AG04450 (cell line): ENCODE measurements at regions of chr9 and their contacts with region 1.

Region 1: GRCh38 chr9:129139993-129140396 is 28.8 kb downstream of the PTPA start:
- DNase-seq: peak; percentile 99
- H3K4me3 ChIP-seq: peak overlapping the region; percentile 60
- H3K27ac ChIP-seq: peak overlapping the region; percentile 100
- H3K27me3 ChIP-seq: no peaks in the 10 kb centered on the region
- CTCF ChIP-seq: no peak

Region 2: GRCh38 chr9:129166623-129167557 is 26.9 kb after region 1 on chr9:
- CTCF ChIA-PET with region 1: interaction called, 145 read pairs
- POLR2A ChIA-PET with region 1: interaction called, 21 read pairs
- DNase-seq: no peak
- H3K4me3 ChIP-seq: peak overlapping the region; percentile 42
- H3K27ac ChIP-seq: peak overlapping the region; percentile 98
- H3K27me3 ChIP-seq: no peaks in the 10 kb centered on the region
- CTCF ChIP-seq: no peak

Region 3: DNA sequence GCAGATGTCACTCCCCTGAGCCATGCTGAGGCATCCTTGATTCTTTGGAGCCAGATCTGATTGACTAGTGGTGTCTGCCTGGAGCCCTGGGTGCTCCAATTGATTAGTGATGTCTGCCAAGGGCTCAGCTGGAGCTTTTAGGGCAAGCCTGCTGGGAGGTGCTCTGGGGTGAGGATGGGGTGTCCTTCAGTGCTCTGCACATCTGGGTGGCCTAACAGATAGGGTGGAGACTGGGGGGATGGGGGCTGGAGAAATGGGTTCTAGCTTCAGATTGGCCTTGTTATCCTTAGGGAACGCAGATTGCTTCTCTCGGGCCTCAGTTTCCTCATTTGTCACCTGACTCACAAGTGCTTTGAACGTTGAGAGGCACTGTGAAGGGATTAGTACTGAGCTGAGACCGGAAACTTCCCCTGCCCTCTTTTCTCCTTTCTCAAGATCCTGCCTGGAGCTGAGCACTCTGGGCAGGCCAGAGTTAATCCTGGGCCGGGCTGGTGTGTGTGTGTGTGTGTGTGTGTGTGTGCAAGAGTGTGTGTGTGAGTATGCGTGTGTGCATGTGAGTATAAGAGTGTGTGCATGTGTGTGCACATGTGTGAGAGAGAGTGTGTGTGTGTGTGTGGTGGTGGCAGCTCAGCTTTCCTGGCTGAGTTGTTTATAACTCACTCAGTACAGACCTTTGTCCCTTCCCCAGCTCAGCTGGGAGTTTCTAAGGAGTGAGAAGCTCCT is 43.7 kb after region 1 on chr9:
- CTCF ChIA-PET with region 1: interaction called, 10 read pairs
- POLR2A ChIA-PET with region 1: no interaction called
- DNase-seq: no peak
- H3K4me3 ChIP-seq: no peak overlapping the region
- H3K27ac ChIP-seq: no peak overlapping the region
- H3K27me3 ChIP-seq: no peaks in the 10 kb centered on the region
- CTCF ChIP-seq: no peak

Region 4: DNA sequence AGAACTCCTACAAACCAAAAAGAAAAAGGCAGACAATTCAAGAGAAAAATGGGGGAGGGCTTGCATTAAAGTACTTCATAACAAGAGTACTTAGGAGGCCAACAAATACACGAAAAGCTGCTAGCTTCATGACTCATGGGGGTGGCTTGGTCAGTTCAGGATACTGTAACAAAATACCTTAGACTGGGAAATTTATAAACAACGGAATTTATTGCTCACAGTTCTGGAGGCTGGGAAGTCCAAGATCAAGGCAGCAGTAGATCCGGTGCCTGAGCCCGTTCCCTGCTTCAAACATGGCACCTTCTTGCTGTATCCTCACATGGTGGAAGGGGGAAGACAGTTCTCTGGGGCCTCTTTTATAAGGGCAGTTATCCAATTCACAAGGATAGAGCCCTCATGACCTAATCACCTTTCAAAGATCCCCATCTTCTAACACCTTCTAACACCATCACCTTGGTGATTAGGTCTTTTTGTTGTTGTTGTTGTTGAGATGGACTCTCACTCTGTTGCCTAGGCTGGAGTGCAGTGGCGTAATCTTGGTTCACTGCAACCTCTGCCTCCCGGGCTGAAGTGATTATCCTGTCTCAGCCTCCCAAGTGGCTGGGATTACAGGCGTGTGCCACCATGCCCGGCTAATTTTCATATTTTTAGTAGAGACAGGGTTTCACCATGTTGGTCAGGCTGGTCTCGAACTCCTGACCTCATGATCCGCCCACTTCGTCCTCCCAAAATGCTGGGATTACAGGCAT is 369.7 kb after region 1 on chr9:
- CTCF ChIA-PET with region 1: interaction called, 4 read pairs
- POLR2A ChIA-PET with region 1: interaction called, 12 read pairs
- DNase-seq: peak; percentile 91
- H3K4me3 ChIP-seq: no peak overlapping the region
- H3K27ac ChIP-seq: peak overlapping the region; percentile 70
- H3K27me3 ChIP-seq: no peaks in the 10 kb centered on the region
- CTCF ChIP-seq: no peak

Region 5: DNA sequence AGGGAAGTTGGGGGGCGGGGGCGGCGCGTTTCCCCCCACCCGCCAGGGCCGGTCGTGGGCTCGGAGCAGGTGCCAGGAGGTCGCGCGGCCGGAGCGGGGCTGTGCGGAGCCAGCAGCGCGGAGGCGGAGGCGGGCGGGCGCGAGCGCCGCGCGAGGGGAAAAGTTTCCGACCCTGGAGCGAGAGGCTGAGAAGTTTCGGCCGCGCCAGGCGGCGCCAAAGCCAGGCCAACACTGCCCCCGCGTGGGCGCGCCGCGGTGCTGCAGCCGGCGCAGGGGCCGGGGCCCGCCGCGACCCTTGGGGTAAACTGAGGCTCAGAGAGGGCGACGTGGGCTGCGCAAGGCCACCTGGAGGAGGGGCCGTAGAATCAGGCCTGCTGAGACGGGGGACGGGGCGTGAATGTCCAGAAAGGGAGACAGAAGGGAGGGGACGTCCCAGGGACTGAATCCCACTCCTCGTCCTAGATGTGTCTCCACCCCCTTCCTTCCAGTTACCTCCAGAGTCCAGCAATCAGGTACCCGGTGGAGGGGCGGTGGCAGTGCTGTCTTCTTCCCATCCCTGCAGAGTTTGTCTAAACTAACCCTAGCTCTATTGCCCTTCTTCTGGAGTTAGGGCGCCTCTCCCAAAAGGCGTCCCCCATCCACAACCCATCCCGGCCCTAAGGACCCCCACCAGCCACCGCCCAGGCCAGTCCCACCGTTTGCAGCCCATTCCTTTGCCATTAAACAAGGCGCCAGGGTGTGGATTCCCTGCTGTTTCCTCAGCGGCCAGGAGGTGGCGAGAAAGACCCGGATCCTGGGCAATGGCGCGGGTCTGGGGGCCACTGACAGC is 470.7 kb after region 1 on chr9:
- CTCF ChIA-PET with region 1: interaction called, 21 read pairs
- POLR2A ChIA-PET with region 1: interaction called, 5 read pairs
- DNase-seq: no peak
- H3K4me3 ChIP-seq: peak overlapping the region; percentile 68
- H3K27ac ChIP-seq: peak overlapping the region; percentile 47
- H3K27me3 ChIP-seq: no peaks in the 10 kb centered on the region
- CTCF ChIP-seq: peak; percentile 80

Region 6: GRCh38 chr9:129617167-129617566 is 477.2 kb after region 1 on chr9:
- CTCF ChIA-PET with region 1: interaction called, 302 read pairs
- POLR2A ChIA-PET with region 1: interaction called, 4 read pairs
- DNase-seq: peak; percentile 67
- H3K4me3 ChIP-seq: no peak overlapping the region
- H3K27ac ChIP-seq: no peak overlapping the region
- H3K27me3 ChIP-seq: no peaks in the 10 kb centered on the region
- CTCF ChIP-seq: peak; percentile 73

Region 7: DNA sequence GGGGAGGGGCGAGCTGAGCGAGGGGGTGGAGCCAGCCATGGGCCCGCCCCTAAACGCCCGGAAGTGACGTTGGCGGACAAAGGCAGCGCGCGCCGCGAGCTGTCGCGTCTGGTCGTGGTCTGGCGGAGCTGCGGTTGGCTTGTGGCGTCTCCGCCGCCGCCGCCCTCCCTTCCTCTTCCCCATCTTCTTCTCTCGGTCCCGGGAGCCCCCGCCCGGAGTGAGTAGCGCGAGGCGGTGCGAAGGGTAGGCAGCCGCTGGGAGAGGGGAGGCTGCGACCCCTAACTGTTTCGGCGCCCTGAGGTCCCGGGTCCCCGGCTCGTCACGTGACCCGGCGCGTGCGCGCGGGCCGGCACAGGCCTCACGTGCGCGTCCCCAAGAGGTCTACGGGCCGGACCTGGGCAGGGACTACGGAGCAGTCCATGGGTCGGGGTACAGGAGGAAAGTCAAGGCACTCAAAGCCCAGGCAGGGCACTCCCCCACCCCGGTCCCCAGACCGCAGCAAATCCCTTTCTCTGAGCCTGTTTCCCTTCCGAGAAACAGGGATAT is 486.2 kb after region 1 on chr9 and contains the start of gene NTMT1:
- CTCF ChIA-PET with region 1: interaction called, 302 read pairs
- POLR2A ChIA-PET with region 1: interaction called, 4 read pairs
- DNase-seq: no peak
- H3K4me3 ChIP-seq: peak within 1 kb of the TSS; percentile 92
- H3K27ac ChIP-seq: peak within 1 kb of the TSS; percentile 94
- H3K27me3 ChIP-seq: no peaks in the 10 kb centered on the region
- CTCF ChIP-seq: no peak
- polyA plus RNA-seq, gene NTMT1: 49.3 and 50.4 TPM in 2 replicates